ENCODE measurements at regions of chr2 and their contacts with region 1.

Region 1: DNA sequence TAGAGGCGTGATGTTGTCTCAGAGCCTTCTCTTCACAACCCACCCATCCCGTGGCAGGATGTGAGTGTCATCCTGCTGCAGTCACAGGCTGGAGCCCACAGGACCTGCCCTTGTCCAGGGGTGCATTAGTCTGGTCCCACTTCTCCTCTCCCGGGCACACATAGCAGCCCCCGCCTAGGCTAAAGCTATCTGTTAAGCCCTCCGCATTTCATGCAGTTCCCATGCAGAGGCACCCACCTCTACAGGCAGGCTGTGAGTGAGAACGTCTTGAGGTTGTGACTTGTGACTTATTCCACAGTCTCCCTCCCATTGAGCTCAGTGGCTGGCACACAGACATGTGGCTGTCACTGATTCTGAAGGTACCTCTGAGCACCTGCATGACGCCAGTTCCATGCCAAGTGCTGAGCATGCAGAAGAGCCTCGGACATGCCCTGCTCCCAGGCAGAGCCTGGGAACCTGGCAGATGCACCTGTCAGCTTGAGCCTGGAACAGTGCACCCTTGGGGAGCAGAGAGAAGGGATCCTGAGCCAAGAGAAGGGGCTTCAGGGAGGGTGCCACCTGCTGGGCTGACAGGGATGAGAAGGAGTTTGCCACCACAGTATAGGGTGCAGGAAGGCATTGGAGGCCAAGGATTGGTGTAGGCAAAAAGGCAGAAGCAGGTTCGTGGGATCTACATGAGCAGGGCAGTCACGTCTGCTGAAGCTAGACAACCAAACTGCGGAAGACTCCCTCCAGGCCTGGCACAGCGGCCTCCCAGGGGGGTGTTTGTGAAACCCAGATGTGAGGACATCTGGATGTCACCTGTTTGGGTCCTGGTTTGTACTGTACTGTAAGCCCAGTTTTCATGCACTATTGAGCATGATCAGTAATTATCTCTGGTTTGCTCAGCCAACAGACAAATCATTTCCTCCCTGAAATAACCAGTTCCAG is 213.6 kb downstream of the GLI2 start:
- DNase-seq: peak; percentile 30
- H3K4me3 ChIP-seq: no peak overlapping the region
- H3K27ac ChIP-seq: no peak overlapping the region
- H3K4me1 ChIP-seq: no peaks in the 10 kb centered on the region
- H3K27me3 ChIP-seq: no peaks in the 10 kb centered on the region
- CTCF ChIP-seq: peak; percentile 11

Region 2: GRCh38 chr2:120735746-120736170 is 213.5 kb before region 1 on chr2 and contains the start of gene GLI2:
- intact Hi-C with region 1: loop called (anchors 10 kb)
- DNase-seq: peak; percentile 71
- H3K4me3 ChIP-seq: peak within 1 kb of the TSS; percentile 40
- H3K27ac ChIP-seq: peak within 1 kb of the TSS; percentile 47
- H3K4me1 ChIP-seq: no peaks in the 10 kb centered on the region
- H3K27me3 ChIP-seq: peaks cover 43% of the 10 kb centered on the region
- CTCF ChIP-seq: peak; percentile 53
- total RNA-seq, gene GLI2: 1.3 to 2.0 TPM

Region 3: DNA sequence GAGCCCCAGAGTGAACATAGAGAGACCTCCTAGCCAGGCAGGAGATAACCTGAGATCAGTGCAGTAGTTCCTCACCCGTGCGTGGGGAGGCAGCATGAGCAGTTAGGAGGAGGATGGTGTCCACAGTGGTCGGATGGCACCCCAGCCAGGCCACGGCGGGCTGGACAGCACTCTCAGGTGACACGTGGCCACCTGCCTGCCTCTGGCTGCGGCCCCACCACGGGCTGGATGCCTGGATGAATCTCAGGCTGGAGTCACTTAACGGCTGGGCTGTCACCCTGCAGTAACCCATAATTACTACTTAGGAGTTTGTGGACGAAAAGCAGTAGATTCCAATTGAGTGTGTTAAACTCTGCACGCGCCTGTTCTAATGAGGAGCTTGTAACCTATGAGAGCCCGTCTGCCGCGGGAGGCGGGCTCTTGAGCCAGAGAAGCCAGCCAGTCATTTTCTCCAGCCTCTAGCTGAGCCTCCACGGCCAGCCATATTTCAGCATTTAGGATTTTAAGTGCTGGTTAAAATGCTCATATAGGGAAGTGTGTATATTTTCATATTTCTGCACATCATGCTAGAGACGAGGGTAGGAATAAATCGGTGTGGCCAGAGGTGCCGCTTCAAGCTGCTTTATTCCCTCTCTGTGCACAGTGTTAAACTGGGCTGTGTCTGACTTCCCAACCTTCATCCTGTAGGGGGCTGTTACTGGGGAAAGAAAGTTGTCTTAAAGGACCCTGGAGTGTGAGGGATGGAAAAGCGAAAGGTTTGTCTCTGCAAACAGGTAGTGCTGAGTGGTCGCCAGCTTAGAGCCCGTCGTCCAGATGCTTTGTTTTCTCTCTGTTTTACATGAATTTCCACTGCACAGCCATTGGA is 69.6 kb before region 1 on chr2:
- intact Hi-C with region 1: no loop called
- DNase-seq: no peak
- H3K4me3 ChIP-seq: no peak overlapping the region
- H3K27ac ChIP-seq: no peak overlapping the region
- H3K4me1 ChIP-seq: no peaks in the 10 kb centered on the region
- H3K27me3 ChIP-seq: no peaks in the 10 kb centered on the region
- CTCF ChIP-seq: no peak

Measured in colonic mucosa (tissue), 4 donors.